PC-3 (cell line): ENCODE measurements at regions of chr5 and their contacts with region 1.

Region 1: GRCh38 chr5:60699530-60700382 is at the start of gene DEPDC1B:
- DNase-seq: peak; percentile 79
- ATAC-seq: peak; percentile 85
- H3K4me3 ChIP-seq: peak within 1 kb of the TSS; percentile 95
- H3K27ac ChIP-seq: peak within 1 kb of the TSS; percentile 79
- H3K4me1 ChIP-seq: peaks cover 35% of the 10 kb centered on the region
- H3K27me3 ChIP-seq: no peaks in the 10 kb centered on the region
- CTCF ChIP-seq: peak; percentile 40
- total RNA-seq, gene DEPDC1B: 22.7 and 23.8 TPM in 2 replicates

Region 2: GRCh38 chr5:60687927-60688720 is 11.6 kb before region 1 on chr5:
- CTCF ChIA-PET with region 1: interaction called, 10 read pairs
- POLR2A ChIA-PET with region 1: interaction called, 10 read pairs
- intact Hi-C with region 1: no loop called
- DNase-seq: peak; percentile 39
- ATAC-seq: peak; percentile 95
- H3K4me3 ChIP-seq: no peak overlapping the region
- H3K27ac ChIP-seq: no peak overlapping the region
- H3K4me1 ChIP-seq: no peaks in the 10 kb centered on the region
- H3K27me3 ChIP-seq: no peaks in the 10 kb centered on the region
- CTCF ChIP-seq: peak; percentile 29; the same call in 1 of the 2 replicates

Region 3: DNA sequence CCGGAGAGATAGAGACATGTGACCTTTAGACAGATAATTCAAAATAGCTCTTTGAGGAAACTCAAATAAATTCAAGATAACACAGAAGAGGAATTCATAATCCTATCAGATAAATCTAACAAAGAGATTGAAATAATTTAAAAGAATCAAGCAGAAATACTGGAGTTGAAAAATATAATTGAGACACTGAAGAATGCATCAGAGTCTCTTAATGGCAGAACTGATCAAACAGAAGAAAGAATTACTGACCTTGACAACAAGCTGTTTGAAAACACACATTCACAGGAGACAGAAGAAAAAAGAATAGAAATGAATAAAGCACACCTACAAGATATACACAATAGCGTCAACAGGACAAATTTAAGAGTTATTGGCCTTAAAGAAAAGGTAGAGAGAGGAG is 40.6 kb after region 1 on chr5:
- CTCF ChIA-PET with region 1: no interaction called
- POLR2A ChIA-PET with region 1: interaction called, 13 read pairs
- intact Hi-C with region 1: no loop called
- DNase-seq: no peak
- ATAC-seq: no peak
- H3K4me3 ChIP-seq: no peak overlapping the region
- H3K27ac ChIP-seq: no peak overlapping the region
- H3K4me1 ChIP-seq: no peaks in the 10 kb centered on the region
- H3K27me3 ChIP-seq: no peaks in the 10 kb centered on the region
- CTCF ChIP-seq: no peak

Region 4: DNA sequence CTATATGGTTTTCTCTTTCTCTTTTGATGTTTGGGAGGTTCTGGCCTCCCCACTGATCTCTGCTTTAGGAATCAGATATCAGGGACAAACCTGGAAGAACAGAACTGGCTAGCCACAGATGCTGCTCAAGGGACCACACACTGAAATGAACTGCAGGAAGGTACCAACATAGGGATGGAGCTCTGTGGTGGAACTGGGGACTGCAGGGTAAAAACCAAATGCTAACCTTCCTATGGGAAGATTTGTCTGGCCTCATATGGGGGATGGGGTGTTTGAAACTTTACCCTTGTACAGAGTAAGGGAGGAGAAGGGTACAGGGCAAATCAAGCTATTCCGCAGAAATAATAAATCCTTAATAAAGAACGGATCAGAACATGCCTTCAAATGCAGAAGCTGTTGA is 94.9 kb after region 1 on chr5:
- CTCF ChIA-PET with region 1: no interaction called
- POLR2A ChIA-PET with region 1: no interaction called
- intact Hi-C with region 1: no loop called
- DNase-seq: no peak
- ATAC-seq: peak; percentile 37; the same call in 1 of the 2 replicates
- H3K4me3 ChIP-seq: no peak overlapping the region
- H3K27ac ChIP-seq: no peak overlapping the region
- H3K4me1 ChIP-seq: no peaks in the 10 kb centered on the region
- H3K27me3 ChIP-seq: no peaks in the 10 kb centered on the region
- CTCF ChIP-seq: no peak

Region 5: DNA sequence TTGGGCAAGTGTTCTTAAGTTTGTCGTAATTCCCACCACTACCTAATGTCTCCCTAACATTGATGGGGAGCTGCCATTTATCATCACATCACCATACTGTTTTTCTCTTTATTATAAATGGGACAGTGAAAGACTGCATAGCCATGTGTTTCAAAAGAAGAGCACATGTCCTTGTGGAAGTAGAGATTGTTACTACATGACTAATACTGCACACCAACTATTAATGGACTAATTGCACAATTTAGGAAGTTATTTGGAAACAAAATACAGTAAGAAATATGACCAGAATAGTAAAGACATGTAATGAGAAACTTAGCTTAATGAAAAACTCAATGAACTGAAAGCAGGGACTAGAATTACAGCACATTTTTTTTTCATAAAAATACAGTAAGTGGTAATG is 156.3 kb after region 1 on chr5:
- CTCF ChIA-PET with region 1: no interaction called
- POLR2A ChIA-PET with region 1: no interaction called
- intact Hi-C with region 1: no loop called
- DNase-seq: no peak
- ATAC-seq: no peak
- H3K4me3 ChIP-seq: no peak overlapping the region
- H3K27ac ChIP-seq: no peak overlapping the region
- H3K4me1 ChIP-seq: no peaks in the 10 kb centered on the region
- H3K27me3 ChIP-seq: no peaks in the 10 kb centered on the region
- CTCF ChIP-seq: no peak